ENCODE measurements at regions of chr17 and their contacts with region 1.

Region 1: GRCh38 chr17:6473128-6473767 is 29.0 kb downstream of the PIMREG start:
- DNase-seq: peak; percentile 72
- H3K4me3 ChIP-seq: no peak overlapping the region
- H3K27ac ChIP-seq: no peak overlapping the region
- H3K4me1 ChIP-seq: peaks cover 15% of the 10 kb centered on the region
- H3K27me3 ChIP-seq: no peaks in the 10 kb centered on the region
- CTCF ChIP-seq: peak; percentile 95 to 97
- POLR2A ChIP-seq: no peak

Region 2: DNA sequence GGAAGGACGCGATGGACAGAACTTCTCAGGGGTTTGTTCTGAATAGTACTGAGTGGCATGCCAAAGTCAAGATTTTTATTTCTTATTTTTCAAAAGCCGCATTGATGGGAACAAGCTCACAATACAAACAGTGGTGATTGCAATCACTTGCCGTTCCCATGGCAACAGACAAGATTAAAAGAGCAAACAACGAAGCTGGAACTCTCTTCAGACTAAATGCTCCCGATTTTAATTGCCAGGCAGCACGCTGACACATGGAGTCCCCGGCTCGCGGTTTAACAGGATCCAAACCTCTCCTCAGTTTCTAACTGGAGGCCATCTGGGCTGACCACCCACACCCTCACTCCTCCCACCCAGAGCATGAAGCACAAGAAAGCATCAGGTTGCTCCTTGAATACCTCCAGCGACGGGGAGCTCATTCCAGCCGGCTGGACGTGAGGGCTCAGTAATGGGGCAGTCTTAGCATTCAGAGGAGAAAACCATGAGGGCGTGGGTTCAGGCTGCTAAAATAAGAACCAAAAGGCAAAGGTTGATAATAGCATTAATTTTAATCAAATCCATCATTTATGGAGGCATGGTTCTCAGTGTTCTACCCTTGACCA is 79.8 kb before region 1 on chr17:
- CTCF ChIA-PET with region 1: no interaction called
- POLR2A ChIA-PET with region 1: no interaction called
- dilution Hi-C with region 1: no loop called
- intact Hi-C with region 1: no loop called
- DNase-seq: no peak
- H3K4me3 ChIP-seq: no peak overlapping the region
- H3K27ac ChIP-seq: no peak overlapping the region
- H3K4me1 ChIP-seq: no peaks in the 10 kb centered on the region
- H3K27me3 ChIP-seq: peaks cover 0 to 9% of the 10 kb centered on the region in 2 experiments
- CTCF ChIP-seq: no peak
- POLR2A ChIP-seq: no peak

Region 3: DNA sequence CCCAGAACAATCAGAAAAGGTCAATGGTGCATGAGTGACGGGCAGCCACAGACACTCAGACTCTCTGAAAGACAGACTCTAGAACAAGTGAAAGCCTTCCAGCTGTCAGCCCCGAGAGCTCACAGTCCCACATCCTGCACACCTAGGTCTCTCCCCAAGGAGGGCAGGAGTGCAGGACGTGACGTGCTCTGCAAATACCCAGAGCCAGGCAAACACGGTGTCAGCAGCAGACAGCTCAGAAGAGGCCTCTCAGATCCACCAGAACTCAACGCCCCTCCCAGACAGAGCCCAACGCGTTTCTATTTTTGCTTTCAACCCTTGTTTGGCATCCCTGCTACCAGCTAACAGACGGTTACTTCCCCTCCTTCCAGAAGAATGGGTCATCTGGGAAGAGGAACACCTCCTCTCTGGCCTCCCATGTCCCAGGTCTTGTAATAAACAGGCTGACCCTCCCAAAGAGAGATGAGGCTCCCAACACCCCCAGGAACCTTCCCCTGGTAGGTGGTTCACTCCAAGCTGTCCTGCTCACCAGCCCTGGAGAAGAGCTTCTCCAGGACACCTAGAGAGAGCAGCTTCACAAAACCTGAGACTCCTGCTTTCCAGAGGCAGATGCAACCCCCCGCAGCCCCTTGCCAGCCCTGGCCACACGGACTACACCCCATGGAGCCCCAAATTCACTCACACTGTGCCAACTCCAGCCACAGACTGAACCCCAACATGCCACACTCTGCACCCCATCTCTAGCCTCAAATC is 75.5 kb after region 1 on chr17:
- CTCF ChIA-PET with region 1: interaction called, 29 read pairs
- POLR2A ChIA-PET with region 1: no interaction called
- dilution Hi-C with region 1: no loop called
- intact Hi-C with region 1: no loop called
- DNase-seq: no peak
- H3K4me3 ChIP-seq: no peak overlapping the region
- H3K27ac ChIP-seq: no peak overlapping the region
- H3K4me1 ChIP-seq: no peaks in the 10 kb centered on the region
- H3K27me3 ChIP-seq: peaks cover 0 to under 1% of the 10 kb centered on the region in 2 experiments
- CTCF ChIP-seq: no peak
- POLR2A ChIP-seq: no peak

Region 4: DNA sequence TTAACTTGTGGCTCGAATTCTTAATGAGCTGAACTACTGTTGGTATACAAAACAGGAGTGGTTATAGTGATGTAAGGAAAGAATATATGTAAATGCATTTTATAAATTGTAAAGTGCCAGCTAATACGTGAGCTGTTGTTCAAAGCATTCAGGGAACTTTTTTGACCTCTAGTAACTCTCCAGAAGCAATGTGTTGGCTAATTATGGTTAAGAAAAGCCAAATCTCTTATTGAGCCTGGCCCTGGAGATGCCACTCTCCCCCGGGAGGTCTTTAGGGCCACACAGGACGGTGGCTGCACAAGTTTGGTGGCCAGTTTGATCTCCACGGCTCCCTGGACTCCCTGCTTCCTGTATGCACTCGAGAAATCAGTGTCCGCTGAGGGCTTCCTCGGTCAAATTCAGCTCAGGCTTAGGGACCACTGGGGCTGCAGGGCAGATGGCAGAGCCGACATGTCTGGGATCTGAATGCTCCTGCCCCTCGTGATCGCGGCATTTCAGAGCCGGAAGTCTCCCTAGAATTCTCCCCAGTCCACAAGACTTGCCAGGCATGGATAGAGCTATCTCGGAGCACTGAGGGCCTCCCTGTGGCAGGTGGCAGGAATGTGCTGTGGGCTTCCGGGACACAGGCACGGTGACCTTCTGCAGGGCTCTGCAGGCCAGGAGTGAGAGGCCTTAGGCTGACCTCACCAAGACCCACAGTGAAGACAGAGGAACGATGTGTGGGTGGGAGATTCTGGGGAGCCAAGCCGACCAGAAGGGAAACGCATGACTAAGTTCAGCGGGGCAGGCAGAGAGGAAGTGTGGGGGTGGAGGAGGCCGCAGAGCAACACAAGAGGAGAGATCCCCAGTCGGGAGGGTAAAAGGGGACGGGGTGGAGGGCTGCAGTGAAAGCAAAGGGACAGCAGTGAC is 101.7 kb after region 1 on chr17:
- CTCF ChIA-PET with region 1: interaction called, 77 read pairs
- POLR2A ChIA-PET with region 1: no interaction called
- dilution Hi-C with region 1: no loop called
- intact Hi-C with region 1: loop called (anchors 1 kb)
- DNase-seq: peak; percentile 69
- H3K4me3 ChIP-seq: no peak overlapping the region
- H3K27ac ChIP-seq: peak overlapping the region; percentile 19
- H3K4me1 ChIP-seq: peaks cover 14% of the 10 kb centered on the region
- H3K27me3 ChIP-seq: no peaks in the 10 kb centered on the region
- CTCF ChIP-seq: no peak
- POLR2A ChIP-seq: no peak

Region 5: GRCh38 chr17:6610011-6610410 is 136.8 kb after region 1 on chr17:
- CTCF ChIA-PET with region 1: interaction called, 12 read pairs
- POLR2A ChIA-PET with region 1: no interaction called
- dilution Hi-C with region 1: no loop called
- intact Hi-C with region 1: no loop called
- DNase-seq: no peak
- H3K4me3 ChIP-seq: no peak overlapping the region
- H3K27ac ChIP-seq: no peak overlapping the region
- H3K4me1 ChIP-seq: no peaks in the 10 kb centered on the region
- H3K27me3 ChIP-seq: no peaks in the 10 kb centered on the region
- CTCF ChIP-seq: no peak
- POLR2A ChIP-seq: no peak

Region 6: GRCh38 chr17:6651357-6651918 is 178.2 kb after region 1 on chr17 and contains the starts of genes C17orf100 and MED31:
- CTCF ChIA-PET with region 1: interaction called, 13 read pairs
- POLR2A ChIA-PET with region 1: no interaction called
- dilution Hi-C with region 1: no loop called
- intact Hi-C with region 1: no loop called
- DNase-seq: peak; percentile 88
- H3K4me3 ChIP-seq: peak within 1 kb of the TSS; percentile 94 to 99 (median 96)
- H3K27ac ChIP-seq: peak within 1 kb of the TSS; percentile 98
- H3K4me1 ChIP-seq: peaks cover 12% of the 10 kb centered on the region
- H3K27me3 ChIP-seq: peaks cover 31 to 38% of the 10 kb centered on the region in 2 experiments
- CTCF ChIP-seq: no peak
- POLR2A ChIP-seq: peak; percentile 95
- total RNA-seq, gene C17orf100: 1.4 and 1.6 TPM in 2 replicates
- total RNA-seq, gene MED31: 28.0 and 29.4 TPM in 2 replicates

Measured in endothelial cell of umbilical vein (primary cell).